Activated CD8-positive, alpha-beta memory T cell treated with anti-CD3 and anti-CD28 coated beads, Interleukin-2, amount 10 ng/mL, durations not matched to agents 7 days and 5 days (primary cell): ENCODE measurements at regions of chr10 and their contacts with region 1.

Region 1: DNA sequence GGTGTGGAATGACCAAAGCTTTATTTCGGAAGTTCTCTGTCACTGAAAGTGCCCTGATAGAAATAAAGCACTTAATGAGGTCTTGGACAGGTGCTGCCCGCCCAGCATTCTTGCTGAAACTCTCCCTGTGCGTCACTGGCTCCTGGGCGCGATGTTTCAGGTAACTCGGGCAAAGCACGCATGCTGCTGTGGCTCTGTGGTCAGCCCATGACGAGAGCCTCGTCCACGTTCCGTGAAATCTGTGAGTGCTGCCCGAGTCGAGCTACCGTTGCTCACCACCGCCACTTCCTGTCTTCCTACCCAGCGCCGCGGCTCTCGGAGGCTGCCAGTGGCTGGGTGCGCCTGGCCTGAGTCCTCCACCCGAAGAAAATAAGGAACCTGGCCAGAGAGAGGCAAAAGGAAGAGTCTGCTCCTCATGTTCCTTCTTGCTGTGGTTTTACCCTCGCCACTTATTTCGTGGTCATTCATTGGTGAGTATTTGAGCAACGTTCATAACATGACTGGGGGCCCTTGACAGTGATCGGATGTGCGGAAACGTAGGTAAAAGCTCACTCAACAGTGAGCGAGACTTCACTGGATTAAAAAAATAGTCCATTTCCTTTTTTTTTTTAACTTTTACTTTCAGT is 95.5 kb downstream of the MAP3K8 start:
- DNase-seq: peak; percentile 96
- ATAC-seq: peak; percentile 87
- H3K4me3 Mint-ChIP-seq: peak overlapping the region; percentile 78
- H3K27ac Mint-ChIP-seq: peak overlapping the region; percentile 99
- H3K4me1 Mint-ChIP-seq: peaks cover 79% of the 10 kb centered on the region
- H3K27me3 Mint-ChIP-seq: no peaks in the 10 kb centered on the region

Region 2: DNA sequence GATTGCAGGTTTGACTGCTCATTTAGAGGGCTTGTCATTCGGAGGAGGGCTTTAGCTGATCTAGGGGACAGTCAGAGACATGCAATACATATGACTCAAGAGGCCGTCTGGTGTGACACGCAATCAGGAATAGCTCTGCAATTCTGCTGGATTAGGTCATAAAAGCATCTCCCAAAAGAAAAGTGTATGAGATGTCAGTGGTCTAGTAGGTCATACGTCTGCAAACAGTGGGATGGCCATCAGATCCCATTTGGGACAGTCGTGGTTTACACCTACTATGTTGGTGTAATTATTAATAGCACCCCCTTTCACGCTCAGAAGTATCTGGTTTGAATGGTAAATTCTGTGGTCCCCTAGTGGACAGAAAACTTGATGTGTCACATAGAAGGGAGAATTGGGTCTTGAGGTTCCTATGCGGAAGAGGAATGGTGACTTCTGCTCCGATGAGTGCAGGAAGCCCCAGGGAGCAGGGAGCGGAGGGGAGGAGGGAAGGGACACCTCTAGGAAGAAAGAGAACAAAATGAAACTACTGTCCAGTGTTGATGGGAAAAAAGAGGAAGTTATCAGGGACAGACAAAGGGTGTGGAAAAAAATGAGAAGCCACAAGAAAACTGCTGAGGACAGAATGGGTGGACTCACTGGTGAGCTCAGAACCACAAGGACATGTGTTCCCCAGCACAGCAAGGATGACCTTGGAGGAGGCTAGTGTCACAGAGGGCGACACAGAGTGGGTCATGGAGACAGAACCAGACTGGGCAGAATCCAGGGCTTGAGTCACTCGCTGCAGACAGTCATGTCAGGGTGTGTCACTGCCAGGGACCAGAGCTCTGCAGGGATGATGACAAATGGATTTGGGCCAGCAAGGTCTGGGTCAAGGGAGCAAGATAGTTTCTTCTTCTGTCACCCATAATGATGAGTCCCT is 35.6 kb before region 1 on chr10:
- CTCF ChIA-PET with region 1: interaction called, 10 read pairs
- DNase-seq: no peak
- ATAC-seq: no peak
- H3K4me3 Mint-ChIP-seq: no peak overlapping the region
- H3K27ac Mint-ChIP-seq: peak overlapping the region; percentile 14
- H3K4me1 Mint-ChIP-seq: peaks cover 79% of the 10 kb centered on the region
- H3K27me3 Mint-ChIP-seq: no peaks in the 10 kb centered on the region

Region 3: DNA sequence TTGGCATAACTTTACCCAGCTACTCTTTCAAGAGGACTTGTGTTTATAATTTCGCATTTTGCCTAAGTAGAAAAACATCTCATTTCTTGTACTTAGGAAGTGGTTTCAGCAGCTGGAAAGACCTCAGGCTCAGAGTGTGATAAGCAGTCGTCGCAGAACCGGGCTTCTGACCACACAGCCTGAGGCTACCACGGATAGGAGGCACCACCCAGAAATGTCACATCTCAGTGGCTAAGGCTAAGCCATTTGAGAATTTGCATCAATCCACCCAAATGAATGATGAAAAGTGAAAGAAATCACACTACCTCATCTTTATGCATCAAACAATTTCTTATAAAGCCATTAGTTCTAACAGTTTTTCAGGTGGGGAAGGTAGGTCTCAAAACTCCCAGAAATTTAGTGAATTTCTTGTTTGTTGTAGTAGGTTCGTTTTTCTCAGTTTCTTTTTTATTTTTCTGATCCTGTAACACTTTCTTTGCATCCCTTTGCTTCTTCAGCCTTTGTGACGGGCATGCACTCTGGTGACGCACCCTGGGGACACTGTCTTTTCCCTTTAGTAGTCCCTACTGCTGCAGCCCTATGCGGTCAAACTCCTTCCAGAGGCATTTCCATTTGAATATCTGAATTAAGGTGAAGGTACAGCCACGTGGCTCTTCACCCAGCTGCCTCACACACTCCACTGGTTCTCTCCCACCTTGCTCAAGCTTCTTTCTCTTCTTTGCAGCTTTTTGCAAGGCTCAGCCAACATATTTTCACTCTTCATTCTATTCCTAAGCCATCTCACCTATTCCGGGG is 27.0 kb before region 1 on chr10:
- CTCF ChIA-PET with region 1: interaction called, 20 read pairs
- DNase-seq: peak; percentile 94
- ATAC-seq: peak; percentile 95
- H3K4me3 Mint-ChIP-seq: peak overlapping the region; percentile 63
- H3K27ac Mint-ChIP-seq: peak overlapping the region; percentile 92
- H3K4me1 Mint-ChIP-seq: peaks cover 88% of the 10 kb centered on the region
- H3K27me3 Mint-ChIP-seq: no peaks in the 10 kb centered on the region